Activated CD4-positive, alpha-beta T cell treated with anti-CD3 and anti-CD28 coated beads, Interleukin-2, amount 10 ng/mL, durations not matched to agents 24 days and 14 days (primary cell): ENCODE measurements at regions of chr3 and their contacts with region 1.

Region 1: GRCh38 chr3:134250717-134251220 is at the start of gene RYK:
- DNase-seq: peak; percentile 93
- H3K4me3 Mint-ChIP-seq: peak within 1 kb of the TSS; percentile 90
- H3K27ac Mint-ChIP-seq: peak within 1 kb of the TSS; percentile 93
- H3K4me1 Mint-ChIP-seq: peaks cover 29% of the 10 kb centered on the region
- H3K27me3 Mint-ChIP-seq: peaks cover 50% of the 10 kb centered on the region
- total RNA-seq, gene RYK: 17.2 and 19.9 TPM in 2 replicates

Region 2: GRCh38 chr3:134180761-134181160 is 70.0 kb before region 1 on chr3:
- intact Hi-C with region 1: no loop called
- DNase-seq: no peak
- H3K4me3 Mint-ChIP-seq: no peak overlapping the region
- H3K27ac Mint-ChIP-seq: no peak overlapping the region
- H3K4me1 Mint-ChIP-seq: no peaks in the 10 kb centered on the region
- H3K27me3 Mint-ChIP-seq: no peaks in the 10 kb centered on the region

Region 3: DNA sequence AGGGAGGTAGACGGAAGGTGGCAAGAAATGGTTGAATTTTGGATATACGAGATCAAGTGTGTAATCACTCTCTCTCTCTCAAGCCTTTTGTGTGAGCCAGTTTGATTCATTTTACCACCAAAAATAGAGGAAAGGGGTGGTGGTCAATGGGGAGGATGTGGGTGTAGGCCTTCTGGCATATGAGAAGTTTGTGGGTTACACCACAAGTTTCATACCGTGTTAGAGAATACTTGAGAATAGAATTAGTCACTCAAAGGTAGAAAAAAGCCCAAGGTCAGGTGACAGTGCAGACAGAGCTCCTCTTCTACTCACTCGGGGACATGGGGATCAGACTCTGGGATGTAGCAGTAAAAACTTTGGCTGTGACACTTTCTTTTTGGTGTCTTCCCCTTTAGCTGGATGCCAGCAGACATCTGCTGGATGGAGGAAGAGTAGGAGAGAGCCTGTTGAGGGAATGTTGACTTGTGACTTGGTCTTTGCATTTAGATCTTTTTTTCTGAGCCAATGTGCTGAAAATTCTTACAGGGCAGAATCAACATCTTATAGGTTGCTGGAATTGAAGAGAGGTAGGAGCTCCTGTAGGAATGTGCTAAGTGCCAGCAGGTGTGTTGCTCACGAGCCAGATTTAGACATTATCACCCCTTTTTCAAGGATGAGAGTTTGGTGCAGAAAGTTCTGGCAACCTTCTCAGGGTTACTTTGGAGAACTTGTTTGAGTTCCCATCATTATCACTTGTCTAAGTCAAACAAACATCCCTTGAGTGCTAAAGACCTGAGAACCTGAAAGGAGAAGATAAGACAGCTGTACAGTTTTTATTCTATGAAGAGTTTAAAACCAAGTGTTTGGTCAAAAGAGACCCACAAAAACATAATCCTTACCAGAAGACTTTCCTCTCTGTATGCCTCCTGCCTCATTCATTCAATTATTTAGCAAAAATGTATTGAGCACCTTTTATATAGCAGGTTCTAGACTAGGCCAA is 43.8 kb after region 1 on chr3:
- intact Hi-C with region 1: loop called (anchors 1 kb)
- DNase-seq: peak; percentile 89
- H3K4me3 Mint-ChIP-seq: no peak overlapping the region
- H3K27ac Mint-ChIP-seq: no peak overlapping the region
- H3K4me1 Mint-ChIP-seq: peaks cover 2% of the 10 kb centered on the region
- H3K27me3 Mint-ChIP-seq: peaks cover 43% of the 10 kb centered on the region

Region 4: GRCh38 chr3:134308350-134308891 is 57.7 kb after region 1 on chr3:
- intact Hi-C with region 1: no loop called
- DNase-seq: peak; percentile 90
- H3K4me3 Mint-ChIP-seq: peak overlapping the region; percentile 29
- H3K27ac Mint-ChIP-seq: peak overlapping the region; percentile 4
- H3K4me1 Mint-ChIP-seq: peaks cover 2% of the 10 kb centered on the region
- H3K27me3 Mint-ChIP-seq: peaks cover 70% of the 10 kb centered on the region